Stomach (tissue), 19 donors: ENCODE measurements at regions of chr1 and their contacts with region 1.

Region 1: GRCh38 chr1:231866392-231867331 is 240.1 kb downstream of the DISC1 start:
- DNase-seq: peak; percentile 59 to 87
- H3K4me3 ChIP-seq: no peak overlapping the region
- H3K27ac ChIP-seq: no peak overlapping the region
- H3K4me1 ChIP-seq: peaks cover 0 to 31% (median 13%) of the 10 kb centered on the region in 4 donors
- H3K27me3 ChIP-seq: no peaks in the 10 kb centered on the region
- CTCF ChIP-seq: peak in 5 of 7 experiments; percentile 57 to 87 (median 78)
- EP300 ChIP-seq: no peak
- POLR2A ChIP-seq: no peak

Region 2: GRCh38 chr1:231679109-231679508 is 187.6 kb before region 1 on chr1:
- intact Hi-C with region 1: no loop called
- DNase-seq: no peak
- H3K4me3 ChIP-seq: no peak overlapping the region
- H3K27ac ChIP-seq: no peak overlapping the region
- H3K4me1 ChIP-seq: peaks cover 0 to 4% (median 2%) of the 10 kb centered on the region in 4 donors
- H3K27me3 ChIP-seq: no peaks in the 10 kb centered on the region
- CTCF ChIP-seq: no peak
- EP300 ChIP-seq: no peak
- POLR2A ChIP-seq: no peak

Region 3: GRCh38 chr1:232635778-232636356 is 769.2 kb after region 1 on chr1:
- intact Hi-C with region 1: loop called (anchors 5 kb)
- DNase-seq: peak in 1 of 2 donors; percentile 77
- H3K4me3 ChIP-seq: no peak overlapping the region
- H3K27ac ChIP-seq: no peak overlapping the region
- H3K4me1 ChIP-seq: peaks cover 0 to 27% (median 4%) of the 10 kb centered on the region in 4 donors
- H3K27me3 ChIP-seq: no peaks in the 10 kb centered on the region
- CTCF ChIP-seq: peak in 5 of 7 experiments; percentile 47 to 80 (median 74)
- EP300 ChIP-seq: no peak
- POLR2A ChIP-seq: no peak